CD4-positive, alpha-beta T cell (primary cell): ENCODE measurements at regions of chr12 and their contacts with region 1.

Region 1: GRCh38 chr12:55738123-55739024 is 4.5 kb upstream of the GDF11 start:
- DNase-seq: peak; percentile 51 to 91 (median 74)
- ATAC-seq: peak; percentile 73
- H3K4me3 ChIP-seq: peak overlapping the region; percentile 75
- H3K4me3 Mint-ChIP-seq: peak overlapping the region; percentile 93
- H3K27ac ChIP-seq: peak overlapping the region; percentile 79 to 83
- H3K27ac Mint-ChIP-seq: peak overlapping the region; percentile 89
- H3K4me1 ChIP-seq: peaks cover 33% of the 10 kb centered on the region
- H3K4me1 Mint-ChIP-seq: peaks cover 40% of the 10 kb centered on the region
- H3K27me3 ChIP-seq: no peaks in the 10 kb centered on the region
- H3K27me3 Mint-ChIP-seq: no peaks in the 10 kb centered on the region
- CTCF ChIP-seq: peak; percentile 88

Region 2: DNA sequence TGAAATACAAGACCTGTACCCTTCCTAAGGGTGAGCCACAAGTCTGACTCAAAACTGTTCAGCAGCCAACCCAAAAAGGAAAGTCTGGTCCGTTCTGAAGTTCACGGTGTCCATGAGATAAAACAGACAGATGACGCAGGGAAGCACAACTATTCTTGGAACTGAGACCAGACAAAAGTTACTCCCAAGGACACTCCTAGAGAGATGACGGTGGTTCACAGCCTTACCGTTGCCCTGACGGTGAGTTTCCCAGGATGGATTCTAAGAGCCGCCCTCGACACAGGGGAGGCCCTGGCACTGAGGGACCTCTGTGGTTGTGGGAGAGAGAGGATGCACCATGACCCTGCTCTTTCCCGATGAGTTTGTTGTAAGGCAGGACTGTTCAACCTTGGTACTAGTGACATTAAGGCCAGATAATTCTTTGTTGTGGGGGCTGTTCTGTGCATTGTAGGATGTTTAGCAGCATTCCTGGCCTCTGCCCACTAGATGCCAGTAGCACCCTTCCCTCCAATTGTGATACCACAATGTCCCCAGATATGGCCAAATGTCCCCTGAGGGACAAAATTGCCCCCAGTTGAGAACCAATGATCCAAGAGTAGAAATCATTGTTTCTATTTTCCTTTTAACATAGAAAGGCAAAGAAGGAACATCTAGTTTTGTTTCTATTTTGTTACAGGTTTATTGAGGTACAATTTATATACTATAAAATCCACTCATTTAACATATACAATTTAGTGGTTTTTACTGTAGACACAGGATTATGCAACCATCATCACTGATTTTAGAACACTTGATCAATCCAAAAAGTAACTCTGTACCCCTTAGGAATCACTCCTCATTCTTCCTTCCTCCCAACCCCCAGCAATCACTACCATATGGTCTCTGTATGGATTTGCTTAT is 78.6 kb before region 1 on chr12:
- CTCF ChIA-PET with region 1: no interaction called
- POLR2A ChIA-PET with region 1: no interaction called
- intact Hi-C with region 1: loop called in 1 of 2 experiments (anchors 10 kb)
- DNase-seq: peak in 1 of 14 experiments; percentile 20
- ATAC-seq: no peak
- H3K4me3 ChIP-seq: no peak overlapping the region
- H3K4me3 Mint-ChIP-seq: no peak overlapping the region
- H3K27ac ChIP-seq: no peak overlapping the region
- H3K27ac Mint-ChIP-seq: no peak overlapping the region
- H3K4me1 ChIP-seq: peaks cover 4% of the 10 kb centered on the region
- H3K4me1 Mint-ChIP-seq: no peaks in the 10 kb centered on the region
- H3K27me3 ChIP-seq: peaks cover 0 to 2% of the 10 kb centered on the region in 2 experiments
- H3K27me3 Mint-ChIP-seq: peaks cover 5% of the 10 kb centered on the region
- CTCF ChIP-seq: no peak

Region 3: DNA sequence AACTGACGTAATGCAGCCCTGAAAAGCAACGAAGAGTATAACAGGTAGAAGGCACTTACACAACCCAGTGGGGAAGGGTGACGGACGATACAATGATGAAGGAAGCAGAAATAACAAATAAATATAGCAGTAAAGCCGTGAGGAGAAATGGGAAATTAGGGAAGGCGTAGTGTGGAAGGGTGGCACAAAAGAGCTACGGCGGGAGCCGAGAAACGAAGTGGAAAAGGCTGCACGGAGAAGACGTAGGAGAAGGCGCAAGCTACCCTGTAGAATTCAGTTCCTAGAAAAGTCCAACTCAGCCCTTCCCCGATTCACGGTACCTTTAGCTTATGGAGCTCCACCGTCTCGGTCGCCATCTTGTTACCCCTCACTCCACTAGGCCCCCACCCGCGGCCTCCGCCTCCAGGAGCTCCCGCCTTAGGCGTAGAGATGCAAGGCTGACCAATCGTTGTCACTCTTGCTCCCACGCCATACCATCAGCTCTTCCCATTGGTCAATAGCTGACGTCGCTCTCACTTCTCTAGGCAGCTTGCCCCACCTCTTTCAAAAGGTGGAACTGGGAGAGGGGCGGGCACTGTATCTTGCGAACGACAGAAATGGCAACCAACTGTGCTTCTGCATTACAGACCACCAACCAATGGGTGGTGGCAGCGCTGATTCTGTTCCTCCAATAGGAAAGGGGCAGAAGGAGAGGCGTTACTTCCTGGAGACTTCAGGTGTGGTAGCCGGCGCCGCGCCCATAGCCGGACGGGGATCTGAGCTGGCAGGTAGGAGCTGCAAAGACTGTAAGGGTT is 79.2 kb after region 1 on chr12 and contains the starts of genes ORMDL2 and SARNP:
- CTCF ChIA-PET with region 1: interaction called, 22 read pairs
- POLR2A ChIA-PET with region 1: interaction called, 31 read pairs
- intact Hi-C with region 1: loop called (anchors 5 kb)
- DNase-seq: peak; percentile 88 to 100 (median 92)
- ATAC-seq: peak; percentile 92
- H3K4me3 ChIP-seq: peak within 1 kb of the TSS; percentile 97
- H3K4me3 Mint-ChIP-seq: no peak within 1 kb of the TSS
- H3K27ac ChIP-seq: peak within 1 kb of the TSS; percentile 71 to 87
- H3K27ac Mint-ChIP-seq: no peak within 1 kb of the TSS
- H3K4me1 ChIP-seq: peaks cover 40% of the 10 kb centered on the region
- H3K4me1 Mint-ChIP-seq: peaks cover 28% of the 10 kb centered on the region
- H3K27me3 ChIP-seq: no peaks in the 10 kb centered on the region
- H3K27me3 Mint-ChIP-seq: no peaks in the 10 kb centered on the region
- CTCF ChIP-seq: no peak
- total RNA-seq, gene ORMDL2: 13.0 to 14.9 TPM
- total RNA-seq, gene SARNP: 38.2 to 38.6 TPM

Region 4: DNA sequence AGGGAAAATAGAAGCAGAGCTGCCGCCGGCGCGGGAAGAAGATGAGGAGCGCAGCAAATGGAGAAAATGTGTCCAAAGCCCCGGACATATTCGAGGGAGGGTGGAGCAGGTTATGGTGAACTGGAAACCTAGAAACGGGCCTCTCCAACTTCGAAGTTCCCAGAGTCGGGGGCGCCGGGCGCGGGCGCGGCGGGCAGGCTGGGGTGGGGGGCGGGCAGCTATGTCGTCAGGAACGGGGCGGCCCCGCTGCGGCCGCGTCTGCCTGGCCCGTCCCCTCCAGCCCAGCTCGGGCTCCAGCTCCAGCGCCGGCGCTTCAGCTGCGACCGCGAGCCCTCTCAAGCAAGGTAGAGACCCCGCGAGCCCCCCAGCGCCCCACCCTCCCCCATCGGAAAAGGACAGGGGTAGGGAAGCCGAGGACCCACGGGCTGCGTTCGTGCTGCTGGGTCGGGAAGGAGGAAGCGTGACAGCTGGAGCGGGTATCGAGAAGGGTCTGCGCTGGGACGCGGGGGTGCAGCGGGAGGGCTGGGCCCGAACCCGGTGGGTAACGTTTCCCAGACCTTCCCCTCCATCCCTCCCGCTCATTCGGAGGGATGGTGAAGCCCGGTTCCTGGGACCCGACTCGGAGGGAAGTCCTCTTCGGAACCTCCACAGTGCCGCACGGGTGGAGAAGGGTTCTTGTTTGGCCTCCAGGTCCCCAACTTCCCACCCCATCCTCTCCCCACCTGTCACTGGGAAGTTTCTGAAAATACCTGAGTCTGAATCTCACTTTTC is 193.6 kb after region 1 on chr12:
- CTCF ChIA-PET with region 1: interaction called, 31 read pairs
- POLR2A ChIA-PET with region 1: interaction called, 18 read pairs
- intact Hi-C with region 1: loop called in 1 of 2 experiments (anchors 2 kb)
- DNase-seq: peak in 8 of 14 experiments; percentile 11 to 63 (median 52)
- ATAC-seq: no peak
- H3K4me3 ChIP-seq: peak overlapping the region; percentile 98
- H3K4me3 Mint-ChIP-seq: peak overlapping the region; percentile 99
- H3K27ac ChIP-seq: peak overlapping the region; percentile 83 to 93
- H3K27ac Mint-ChIP-seq: peak overlapping the region; percentile 97
- H3K4me1 ChIP-seq: peaks cover 68% of the 10 kb centered on the region
- H3K4me1 Mint-ChIP-seq: peaks cover 57% of the 10 kb centered on the region
- H3K27me3 ChIP-seq: no peaks in the 10 kb centered on the region
- H3K27me3 Mint-ChIP-seq: no peaks in the 10 kb centered on the region
- CTCF ChIP-seq: no peak

Region 5: DNA sequence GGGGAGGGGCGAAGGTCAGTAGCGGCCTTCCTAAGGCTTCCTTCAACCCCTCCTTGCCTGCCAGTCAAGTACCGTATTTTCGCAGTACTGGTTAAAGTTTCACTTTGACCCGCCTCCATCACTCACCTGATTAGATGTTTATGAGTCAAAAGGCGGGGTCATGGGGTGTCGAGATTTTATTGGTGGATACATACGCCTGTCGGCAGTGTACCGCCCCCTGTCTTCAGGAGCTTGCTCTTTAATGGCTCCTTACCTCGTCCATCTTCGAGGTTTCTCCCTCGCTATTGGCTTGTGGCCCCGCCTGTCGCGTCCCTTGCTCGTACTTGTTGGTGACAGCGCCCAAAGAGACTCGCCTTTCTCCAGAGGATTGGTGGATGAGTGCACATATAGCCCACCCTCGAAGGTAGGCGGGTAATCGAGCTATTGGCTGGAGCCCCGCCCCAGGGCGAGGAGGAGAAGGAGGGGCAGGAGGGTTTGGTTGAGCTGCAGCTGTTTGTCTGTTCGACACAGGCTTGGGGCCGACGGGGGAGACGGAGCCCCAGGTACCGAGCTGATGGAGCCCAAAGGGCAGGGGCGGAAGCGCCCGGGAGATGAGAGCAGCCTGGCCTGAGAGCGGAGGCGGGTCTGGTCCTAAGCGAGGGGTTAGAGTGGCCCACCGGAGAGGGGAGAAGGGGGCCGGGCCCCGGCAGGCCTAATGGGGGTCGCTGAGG is 235.4 kb after region 1 on chr12 and contains the start of gene RAB5B:
- CTCF ChIA-PET with region 1: interaction called, 6 read pairs
- POLR2A ChIA-PET with region 1: interaction called, 11 read pairs
- intact Hi-C with region 1: no loop called
- DNase-seq: peak; percentile 92 to 100 (median 96)
- ATAC-seq: peak; percentile 86
- H3K4me3 ChIP-seq: peak within 1 kb of the TSS; percentile 74
- H3K4me3 Mint-ChIP-seq: no peak within 1 kb of the TSS
- H3K27ac ChIP-seq: peak within 1 kb of the TSS; percentile 82 to 86
- H3K27ac Mint-ChIP-seq: no peak within 1 kb of the TSS
- H3K4me1 ChIP-seq: peaks cover 26% of the 10 kb centered on the region
- H3K4me1 Mint-ChIP-seq: peaks cover 18% of the 10 kb centered on the region
- H3K27me3 ChIP-seq: no peaks in the 10 kb centered on the region
- H3K27me3 Mint-ChIP-seq: no peaks in the 10 kb centered on the region
- CTCF ChIP-seq: no peak
- total RNA-seq, gene RAB5B: 21.6 to 27.4 TPM

Region 6: GRCh38 chr12:56104109-56104814 is 365.9 kb after region 1 on chr12 and contains the start of gene PA2G4:
- CTCF ChIA-PET with region 1: interaction called, 6 read pairs
- POLR2A ChIA-PET with region 1: interaction called, 12 read pairs
- intact Hi-C with region 1: loop called in 1 of 2 experiments (anchors 10 kb)
- DNase-seq: peak; percentile 89 to 99 (median 96)
- ATAC-seq: peak; percentile 88
- H3K4me3 ChIP-seq: peak within 1 kb of the TSS; percentile 90
- H3K4me3 Mint-ChIP-seq: peak within 1 kb of the TSS; percentile 93
- H3K27ac ChIP-seq: peak within 1 kb of the TSS; percentile 63 to 95
- H3K27ac Mint-ChIP-seq: peak within 1 kb of the TSS; percentile 100
- H3K4me1 ChIP-seq: peaks cover 48% of the 10 kb centered on the region
- H3K4me1 Mint-ChIP-seq: peaks cover 67% of the 10 kb centered on the region
- H3K27me3 ChIP-seq: no peaks in the 10 kb centered on the region
- H3K27me3 Mint-ChIP-seq: no peaks in the 10 kb centered on the region
- CTCF ChIP-seq: no peak
- total RNA-seq, gene PA2G4: 51.0 to 61.0 TPM

Region 7: DNA sequence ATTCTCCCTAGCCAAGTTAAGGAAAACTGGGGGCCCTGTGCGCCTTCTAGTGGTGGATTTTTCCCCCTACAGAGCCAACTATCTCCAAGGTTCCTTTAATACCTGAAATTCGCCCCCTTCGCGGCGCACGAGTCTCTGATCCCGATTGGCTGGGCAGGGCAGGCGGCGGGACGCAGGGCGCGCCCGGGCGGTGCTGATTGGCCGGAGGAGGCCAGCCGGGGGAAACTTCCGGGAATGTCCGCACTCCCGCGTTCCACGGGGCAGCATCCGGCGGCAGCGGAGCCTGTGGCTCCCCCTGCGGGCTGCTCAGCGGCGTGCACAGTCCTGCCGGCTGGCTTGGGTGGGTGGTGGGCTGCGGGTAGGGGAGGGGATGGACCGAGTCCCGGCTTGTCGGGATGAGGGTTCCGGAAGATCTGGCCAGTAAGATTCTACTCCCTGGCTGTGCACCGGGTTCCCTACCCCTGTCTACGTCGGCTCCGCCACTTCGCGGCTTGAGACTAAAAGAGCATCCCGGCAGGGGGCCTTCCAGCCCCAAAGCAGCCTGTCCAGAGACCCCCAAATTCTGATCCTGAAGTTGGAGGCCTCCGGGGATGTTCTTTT is 485.8 kb after region 1 on chr12 and contains the start of gene NABP2:
- CTCF ChIA-PET with region 1: no interaction called
- POLR2A ChIA-PET with region 1: interaction called, 12 read pairs
- intact Hi-C with region 1: loop called in 1 of 2 experiments (anchors 2 kb)
- DNase-seq: peak; percentile 73 to 96 (median 88)
- ATAC-seq: peak; percentile 66
- H3K4me3 ChIP-seq: peak within 1 kb of the TSS; percentile 70
- H3K4me3 Mint-ChIP-seq: peak within 1 kb of the TSS; percentile 98
- H3K27ac ChIP-seq: peak within 1 kb of the TSS; percentile 60 to 81
- H3K27ac Mint-ChIP-seq: peak within 1 kb of the TSS; percentile 100
- H3K4me1 ChIP-seq: peaks cover 56% of the 10 kb centered on the region
- H3K4me1 Mint-ChIP-seq: peaks cover 48% of the 10 kb centered on the region
- H3K27me3 ChIP-seq: no peaks in the 10 kb centered on the region
- H3K27me3 Mint-ChIP-seq: no peaks in the 10 kb centered on the region
- CTCF ChIP-seq: peak; percentile 88
- total RNA-seq, gene NABP2: 7.6 to 9.1 TPM

Region 8: DNA sequence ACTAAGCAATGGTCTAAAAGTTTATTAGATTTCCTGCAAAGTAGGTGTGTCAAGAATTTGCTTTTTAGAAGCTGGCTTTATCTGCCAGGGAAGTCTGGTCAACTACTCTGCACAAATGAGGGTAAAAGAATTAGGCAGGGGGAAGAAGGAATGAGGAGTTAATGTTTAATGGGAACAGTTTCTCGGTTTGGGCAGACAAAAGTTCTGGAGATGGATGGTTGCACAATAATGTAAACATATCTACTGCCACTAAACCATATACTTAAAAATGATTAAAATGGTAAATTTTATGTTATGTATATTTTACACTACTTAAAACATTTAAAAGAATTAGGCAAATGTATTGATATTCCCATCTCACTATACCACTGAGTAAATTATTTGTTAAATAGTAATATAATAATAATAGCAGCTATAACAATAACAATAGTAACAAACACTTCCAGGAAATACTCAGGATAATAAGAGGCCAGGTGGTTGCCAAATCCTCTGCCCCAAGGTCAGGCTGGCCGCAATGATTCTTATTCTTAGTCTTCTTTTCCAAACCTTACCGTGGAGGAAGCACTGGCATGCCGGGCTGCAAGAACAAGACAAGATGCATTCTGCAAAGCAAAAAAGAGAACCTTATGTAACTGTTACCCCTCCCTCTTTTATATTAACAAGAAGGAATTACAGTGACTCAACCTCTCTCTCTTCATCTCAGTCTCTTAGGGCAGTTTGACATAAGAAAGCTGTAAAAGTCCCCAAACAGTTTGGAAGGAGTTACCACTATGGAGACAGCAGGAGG is 547.9 kb after region 1 on chr12:
- CTCF ChIA-PET with region 1: no interaction called
- POLR2A ChIA-PET with region 1: no interaction called
- intact Hi-C with region 1: no loop called
- DNase-seq: no peak
- ATAC-seq: no peak
- H3K4me3 ChIP-seq: no peak overlapping the region
- H3K4me3 Mint-ChIP-seq: no peak overlapping the region
- H3K27ac ChIP-seq: no peak overlapping the region
- H3K27ac Mint-ChIP-seq: peak overlapping the region; percentile 44
- H3K4me1 ChIP-seq: peaks cover 11% of the 10 kb centered on the region
- H3K4me1 Mint-ChIP-seq: peaks cover 14% of the 10 kb centered on the region
- H3K27me3 ChIP-seq: no peaks in the 10 kb centered on the region
- H3K27me3 Mint-ChIP-seq: no peaks in the 10 kb centered on the region
- CTCF ChIP-seq: no peak